GM10248 (cell line): ENCODE measurements at regions of chr17 and their contacts with region 1.

Region 1: GRCh38 chr17:63478791-63479494 is 2.1 kb downstream of the ACE start:
- DNase-seq: peak; percentile 92
- CTCF ChIP-seq: peak; percentile 87

Region 2: DNA sequence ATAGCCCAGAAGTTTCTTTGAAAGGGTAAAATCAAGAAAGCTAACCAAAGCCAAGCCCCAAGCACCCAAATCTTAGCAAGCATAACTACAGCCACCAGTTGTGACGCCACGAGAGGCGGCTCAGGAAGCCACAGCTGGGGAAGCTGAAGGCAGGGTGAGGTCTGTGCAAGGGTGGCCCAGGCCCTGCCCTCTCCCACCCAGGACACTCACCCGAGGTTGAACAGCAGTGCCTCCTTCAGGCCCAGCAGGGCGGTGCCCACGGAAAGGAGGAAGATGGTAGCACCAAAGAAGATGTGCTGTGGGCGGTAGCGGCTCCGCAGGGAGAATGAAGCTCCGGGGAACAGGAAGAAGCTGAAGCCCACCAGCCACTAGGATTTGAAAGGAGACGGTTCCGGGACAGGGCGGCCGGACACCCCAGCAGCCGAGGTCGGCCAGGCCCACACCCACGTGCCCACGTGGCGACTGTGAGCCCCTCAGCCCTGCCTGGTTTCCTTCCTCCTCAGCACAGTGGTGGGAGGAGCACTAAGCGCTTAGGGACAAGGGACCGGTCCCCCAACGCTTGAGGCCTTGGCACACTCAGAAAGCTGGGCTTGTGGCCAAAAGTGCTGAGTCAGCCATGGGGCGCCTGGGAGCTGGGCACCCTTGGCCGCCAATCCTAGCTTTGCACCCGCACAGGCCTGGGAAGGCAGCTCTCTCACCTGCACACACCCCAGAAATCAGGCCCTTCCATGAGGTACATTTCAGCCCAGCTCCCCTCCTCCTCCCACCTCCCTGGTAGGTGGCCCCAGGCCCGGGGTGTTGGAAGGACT is 43.9 kb before region 1 on chr17:
- CTCF ChIA-PET with region 1: interaction called, 224 read pairs
- POLR2A ChIA-PET with region 1: no interaction called
- DNase-seq: no peak
- CTCF ChIP-seq: no peak

Region 3: GRCh38 chr17:63445979-63446691 is 32.8 kb before region 1 on chr17 and contains the start of gene CYB561:
- CTCF ChIA-PET with region 1: interaction called, 20 read pairs
- POLR2A ChIA-PET with region 1: no interaction called
- DNase-seq: peak; percentile 90
- CTCF ChIP-seq: peak; percentile 23

Region 4: GRCh38 chr17:63455417-63455816 is 23.5 kb before region 1 on chr17:
- CTCF ChIA-PET with region 1: interaction called, 19 read pairs
- POLR2A ChIA-PET with region 1: no interaction called
- DNase-seq: no peak
- CTCF ChIP-seq: no peak

Region 5: GRCh38 chr17:63490321-63490720 is 11.4 kb after region 1 on chr17:
- CTCF ChIA-PET with region 1: interaction called, 17 read pairs
- POLR2A ChIA-PET with region 1: no interaction called
- DNase-seq: no peak
- CTCF ChIP-seq: no peak

Region 6: GRCh38 chr17:64091116-64091515 is 612.2 kb after region 1 on chr17:
- CTCF ChIA-PET with region 1: no interaction called
- POLR2A ChIA-PET with region 1: no interaction called
- DNase-seq: peak; percentile 55
- CTCF ChIP-seq: no peak